ENCODE measurements at regions of chr5 and their contacts with region 1.

Region 1: DNA sequence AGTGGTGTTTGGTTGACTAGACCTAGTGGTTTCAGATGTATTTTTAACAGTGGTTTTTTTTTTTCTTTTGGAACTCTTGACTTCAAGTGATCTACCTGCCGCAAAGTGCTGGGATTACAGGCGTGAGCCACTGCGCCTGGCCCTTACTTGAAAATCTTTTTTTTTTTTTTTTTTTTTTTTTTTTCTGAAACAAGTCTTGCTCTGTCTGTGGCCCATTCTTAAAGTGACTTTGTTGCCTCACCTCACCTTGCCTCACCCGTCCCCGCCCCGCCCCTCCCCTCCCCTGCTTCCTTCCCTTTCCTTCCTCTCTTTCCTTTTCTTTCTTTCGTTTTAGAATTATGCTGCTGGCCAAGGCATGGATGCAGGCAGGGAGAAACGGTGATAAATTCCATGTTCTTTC is 26.0 kb downstream of the GPBP1 start:
- DNase-seq: no peak
- H3K4me3 ChIP-seq: no peak overlapping the region
- H3K27ac ChIP-seq: no peak overlapping the region
- H3K4me1 ChIP-seq: peaks cover 7% of the 10 kb centered on the region
- H3K27me3 ChIP-seq: no peaks in the 10 kb centered on the region
- CTCF ChIP-seq: no peak

Region 2: DNA sequence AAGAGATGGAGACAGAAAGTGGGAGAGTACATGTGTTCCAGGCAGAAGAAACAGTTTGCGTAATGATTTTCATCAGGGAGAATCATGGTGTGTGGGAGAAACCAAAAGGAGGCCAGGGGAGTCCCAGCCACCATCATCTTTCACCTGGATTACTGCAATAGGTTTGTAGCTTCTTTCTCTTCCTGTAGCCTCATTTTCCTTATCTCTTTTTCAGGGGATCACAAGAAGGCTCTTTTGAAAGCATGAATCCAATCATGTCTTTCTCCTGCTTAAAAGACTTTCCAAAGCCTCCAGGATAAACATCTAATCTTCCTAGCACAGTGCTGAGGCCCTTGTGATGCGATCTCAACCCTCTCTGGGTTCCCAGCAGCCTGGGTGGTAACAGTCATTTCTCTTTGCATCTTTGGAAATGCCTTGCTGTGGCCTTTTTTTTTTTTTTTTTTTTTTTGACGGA is 36.3 kb before region 1 on chr5:
- CTCF ChIA-PET with region 1: no interaction called
- dilution Hi-C with region 1: loop called (anchors 5 kb)
- in situ Hi-C with region 1: no loop called
- intact Hi-C with region 1: no loop called
- DNase-seq: no peak
- H3K4me3 ChIP-seq: no peak overlapping the region
- H3K27ac ChIP-seq: no peak overlapping the region
- H3K4me1 ChIP-seq: no peaks in the 10 kb centered on the region
- H3K27me3 ChIP-seq: no peaks in the 10 kb centered on the region
- CTCF ChIP-seq: no peak

Measured in mammary epithelial cell (primary cell).